Esophagus muscularis mucosa (tissue), 4 donors: ENCODE measurements at regions of chr3 and their contacts with region 1.

Region 1: GRCh38 chr3:197749601-197750395 is at the start of gene FYTTD1:
- DNase-seq: peak; percentile 96
- H3K4me3 ChIP-seq: peak within 1 kb of the TSS; percentile 84 to 93 (median 87)
- H3K27ac ChIP-seq: peak within 1 kb of the TSS; percentile 94 to 99 (median 96)
- H3K4me1 ChIP-seq: peaks cover 32 to 36% (median 35%) of the 10 kb centered on the region in 4 donors
- H3K27me3 ChIP-seq: no peaks in the 10 kb centered on the region
- CTCF ChIP-seq: peak; percentile 42 to 69 (median 56)
- EP300 ChIP-seq: no peak
- POLR2A ChIP-seq: peak; percentile 54
- total RNA-seq, gene FYTTD1: 57.7 to 111 (median 85.6) TPM

Region 2: DNA sequence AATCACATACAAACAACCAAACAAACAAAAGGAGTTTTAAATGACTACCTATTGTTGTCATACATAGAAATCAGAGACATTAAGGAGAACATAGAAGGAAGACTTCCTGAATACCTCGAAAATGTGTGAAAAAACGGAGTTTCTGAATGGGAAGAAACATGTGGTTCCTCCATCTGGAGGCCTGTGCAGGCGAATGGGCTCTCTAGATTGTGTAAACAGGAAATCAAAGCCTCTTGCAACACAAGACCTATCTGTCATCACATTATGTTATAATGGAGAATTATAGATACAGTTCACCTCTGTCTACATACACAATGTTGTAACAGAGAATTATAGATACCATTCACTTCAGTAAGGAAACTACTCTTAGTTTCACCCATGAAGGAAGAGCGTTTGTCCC is 57.2 kb before region 1 on chr3:
- intact Hi-C with region 1: no loop called
- DNase-seq: no peak
- H3K4me3 ChIP-seq: no peak overlapping the region
- H3K27ac ChIP-seq: no peak overlapping the region
- H3K4me1 ChIP-seq: peaks cover 0 to 5% (median 0%) of the 10 kb centered on the region in 4 donors
- H3K27me3 ChIP-seq: no peaks in the 10 kb centered on the region
- CTCF ChIP-seq: no peak
- EP300 ChIP-seq: no peak
- POLR2A ChIP-seq: no peak

Region 3: GRCh38 chr3:197711973-197712707 is 37.7 kb before region 1 on chr3:
- intact Hi-C with region 1: loop called (anchors 5 kb)
- DNase-seq: peak; percentile 96
- H3K4me3 ChIP-seq: peak overlapping the region; percentile 40 to 55 (median 52)
- H3K27ac ChIP-seq: peak overlapping the region; percentile 87 to 92 (median 89)
- H3K4me1 ChIP-seq: peaks cover 19 to 29% (median 23%) of the 10 kb centered on the region in 4 donors
- H3K27me3 ChIP-seq: no peaks in the 10 kb centered on the region
- CTCF ChIP-seq: no peak
- EP300 ChIP-seq: no peak
- POLR2A ChIP-seq: no peak

Region 4: DNA sequence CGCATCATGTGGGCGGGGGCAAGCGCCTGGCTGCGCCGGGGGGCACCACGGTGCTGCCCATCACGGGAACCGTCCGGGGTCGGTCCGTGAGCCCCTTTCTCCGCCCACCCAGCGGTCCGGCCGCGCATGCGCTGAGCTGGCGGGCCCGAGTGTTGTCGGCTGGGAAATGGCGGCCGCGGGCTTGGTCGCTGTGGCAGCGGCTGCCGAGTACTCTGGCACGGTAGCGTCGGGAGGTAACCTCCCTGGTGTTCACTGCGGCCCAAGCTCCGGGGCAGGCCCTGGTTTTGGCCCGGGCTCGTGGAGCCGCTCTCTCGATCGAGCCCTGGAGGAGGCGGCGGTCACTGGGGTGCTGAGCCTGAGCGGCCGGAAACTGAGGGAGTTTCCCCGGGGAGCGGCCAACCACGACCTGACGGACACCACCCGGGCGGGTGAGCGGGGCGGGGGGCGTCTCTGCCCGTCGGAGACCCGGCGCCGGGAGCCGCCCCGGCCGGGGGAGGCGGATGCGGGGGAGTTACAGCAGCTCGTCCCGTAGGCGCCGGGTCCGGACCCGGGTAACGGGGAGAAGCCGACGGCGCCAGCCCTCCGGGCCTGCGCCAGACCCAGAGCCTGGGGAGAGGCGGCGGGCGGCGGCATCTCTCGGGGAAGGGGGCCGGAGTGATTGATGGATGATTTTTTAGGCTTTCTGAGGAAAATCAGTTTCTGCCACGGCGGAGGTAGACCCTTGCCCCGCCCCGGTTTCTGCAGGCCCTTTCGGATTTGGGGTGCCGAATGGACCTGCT is 41.5 kb after region 1 on chr3 and contains the start of gene LRCH3:
- intact Hi-C with region 1: loop called (anchors 5 kb)
- DNase-seq: peak; percentile 93
- H3K4me3 ChIP-seq: peak within 1 kb of the TSS; percentile 80 to 96 (median 88)
- H3K27ac ChIP-seq: peak within 1 kb of the TSS; percentile 93 to 98 (median 96)
- H3K4me1 ChIP-seq: peaks cover 28 to 46% (median 42%) of the 10 kb centered on the region in 4 donors
- H3K27me3 ChIP-seq: no peaks in the 10 kb centered on the region
- CTCF ChIP-seq: peak in 1 of 3 experiments; percentile 5
- EP300 ChIP-seq: no peak
- POLR2A ChIP-seq: peak; percentile 23
- total RNA-seq, gene LRCH3: 34.6 to 160 (median 55.2) TPM

Region 5: GRCh38 chr3:197858598-197858997 is 108.8 kb after region 1 on chr3:
- intact Hi-C with region 1: no loop called
- DNase-seq: no peak
- H3K4me3 ChIP-seq: no peak overlapping the region
- H3K27ac ChIP-seq: no peak overlapping the region
- H3K4me1 ChIP-seq: no peaks in the 10 kb centered on the region
- H3K27me3 ChIP-seq: no peaks in the 10 kb centered on the region
- CTCF ChIP-seq: no peak
- EP300 ChIP-seq: no peak
- POLR2A ChIP-seq: no peak